A673 (cell line): ENCODE measurements at regions of chr11 and their contacts with region 1.

Region 1: DNA sequence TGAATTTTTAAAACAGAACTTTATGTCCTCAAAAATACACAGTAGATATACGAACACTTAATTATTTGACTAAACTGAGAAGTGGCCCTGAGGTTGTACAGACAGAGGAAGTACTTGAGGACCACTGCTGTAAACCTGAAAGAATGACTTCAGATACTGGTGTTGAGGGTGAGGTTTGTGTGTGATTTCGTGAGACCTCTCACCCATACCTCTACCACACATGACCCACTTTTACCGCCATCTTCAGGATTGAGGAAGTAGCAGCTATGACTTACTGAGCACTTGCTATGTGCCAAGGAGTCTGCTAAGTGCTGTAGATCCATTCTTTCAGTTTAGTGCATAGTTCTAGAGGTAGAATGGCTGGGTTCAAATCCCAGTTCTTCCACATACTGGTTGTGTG is 21.9 kb downstream of the MMP13 start:
- DNase-seq: no peak
- H3K4me3 ChIP-seq: no peak overlapping the region
- H3K27ac ChIP-seq: peak overlapping the region; percentile 93
- H3K4me1 ChIP-seq: peaks cover 55% of the 10 kb centered on the region
- H3K27me3 ChIP-seq: no peaks in the 10 kb centered on the region
- CTCF ChIP-seq: no peak

Region 2: GRCh38 chr11:102680945-102681344 is 252.7 kb before region 1 on chr11:
- CTCF ChIA-PET with region 1: no interaction called
- POLR2A ChIA-PET with region 1: no interaction called
- intact Hi-C with region 1: no loop called
- DNase-seq: no peak
- H3K4me3 ChIP-seq: no peak overlapping the region
- H3K27ac ChIP-seq: no peak overlapping the region
- H3K4me1 ChIP-seq: no peaks in the 10 kb centered on the region
- H3K27me3 ChIP-seq: no peaks in the 10 kb centered on the region
- CTCF ChIP-seq: no peak

Region 3: DNA sequence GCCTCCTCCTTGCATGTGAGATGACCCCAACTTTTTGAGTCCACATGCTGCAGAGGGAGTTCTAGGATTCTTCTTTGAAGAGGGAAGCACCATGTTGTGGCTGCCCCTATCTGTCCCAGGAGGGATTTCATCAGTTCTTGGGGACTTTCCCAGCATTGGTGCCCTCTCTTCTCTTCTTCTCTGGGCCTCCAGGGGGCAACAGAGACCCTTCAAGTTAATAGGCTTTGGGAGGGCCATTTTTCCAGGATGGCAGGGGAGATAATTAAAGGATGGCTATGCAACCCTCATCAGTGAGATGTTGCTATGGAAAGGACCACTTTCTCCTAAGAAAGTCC is 139.2 kb before region 1 on chr11:
- CTCF ChIA-PET with region 1: no interaction called
- POLR2A ChIA-PET with region 1: no interaction called
- intact Hi-C with region 1: loop called (anchors 1 kb)
- DNase-seq: peak; percentile 95
- H3K4me3 ChIP-seq: no peak overlapping the region
- H3K27ac ChIP-seq: peak overlapping the region; percentile 48
- H3K4me1 ChIP-seq: peaks cover 8% of the 10 kb centered on the region
- H3K27me3 ChIP-seq: no peaks in the 10 kb centered on the region
- CTCF ChIP-seq: peak; percentile 85

Region 4: GRCh38 chr11:102850973-102851745 is 82.5 kb before region 1 on chr11:
- CTCF ChIA-PET with region 1: no interaction called
- POLR2A ChIA-PET with region 1: no interaction called
- intact Hi-C with region 1: no loop called
- DNase-seq: no peak
- H3K4me3 ChIP-seq: no peak overlapping the region
- H3K27ac ChIP-seq: no peak overlapping the region
- H3K4me1 ChIP-seq: peaks cover 12% of the 10 kb centered on the region
- H3K27me3 ChIP-seq: no peaks in the 10 kb centered on the region
- CTCF ChIP-seq: no peak

Region 5: DNA sequence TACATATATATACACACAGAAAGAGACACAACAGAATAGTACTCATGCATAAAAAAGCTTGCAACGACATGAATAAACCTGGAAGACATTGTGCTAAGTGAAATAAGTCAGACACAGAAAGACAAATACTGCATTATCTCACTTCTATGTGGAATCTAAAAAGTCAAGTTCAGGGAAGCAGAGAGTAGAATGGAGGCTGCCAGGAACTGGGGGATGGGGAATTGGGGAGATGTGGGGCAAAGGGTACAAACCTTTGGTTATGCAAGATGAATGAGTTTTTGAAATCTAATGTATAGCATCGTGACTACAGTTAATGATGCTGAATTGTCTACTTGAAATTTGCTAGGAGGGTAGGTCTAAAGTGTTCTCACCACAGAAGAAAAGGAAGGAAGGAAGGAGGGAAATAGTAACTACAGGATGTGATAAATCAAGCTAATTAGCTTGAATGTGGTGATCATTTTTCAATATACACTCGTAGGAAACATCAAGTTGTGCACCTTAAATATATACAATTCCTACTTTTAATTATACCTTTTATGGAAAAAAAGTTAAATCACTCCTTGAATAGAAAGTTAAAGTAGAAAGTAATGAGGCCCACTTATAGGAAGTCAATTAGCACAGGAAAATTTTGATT is 11.9 kb before region 1 on chr11:
- CTCF ChIA-PET with region 1: interaction called, 3 read pairs
- POLR2A ChIA-PET with region 1: interaction called, 3 read pairs
- intact Hi-C with region 1: loop called (anchors 1 kb)
- DNase-seq: peak; percentile 95
- H3K4me3 ChIP-seq: no peak overlapping the region
- H3K27ac ChIP-seq: peak overlapping the region; percentile 94
- H3K4me1 ChIP-seq: peaks cover 64% of the 10 kb centered on the region
- H3K27me3 ChIP-seq: no peaks in the 10 kb centered on the region
- CTCF ChIP-seq: no peak

Region 6: GRCh38 chr11:103035791-103036434 is 102.3 kb after region 1 on chr11:
- CTCF ChIA-PET with region 1: no interaction called
- POLR2A ChIA-PET with region 1: no interaction called
- intact Hi-C with region 1: loop called (anchors 5 kb)
- DNase-seq: peak; percentile 95
- H3K4me3 ChIP-seq: no peak overlapping the region
- H3K27ac ChIP-seq: peak overlapping the region; percentile 61
- H3K4me1 ChIP-seq: peaks cover 13% of the 10 kb centered on the region
- H3K27me3 ChIP-seq: no peaks in the 10 kb centered on the region
- CTCF ChIP-seq: peak; percentile 85